ENCODE measurements at regions of chr7 and their contacts with region 1.

Region 1: DNA sequence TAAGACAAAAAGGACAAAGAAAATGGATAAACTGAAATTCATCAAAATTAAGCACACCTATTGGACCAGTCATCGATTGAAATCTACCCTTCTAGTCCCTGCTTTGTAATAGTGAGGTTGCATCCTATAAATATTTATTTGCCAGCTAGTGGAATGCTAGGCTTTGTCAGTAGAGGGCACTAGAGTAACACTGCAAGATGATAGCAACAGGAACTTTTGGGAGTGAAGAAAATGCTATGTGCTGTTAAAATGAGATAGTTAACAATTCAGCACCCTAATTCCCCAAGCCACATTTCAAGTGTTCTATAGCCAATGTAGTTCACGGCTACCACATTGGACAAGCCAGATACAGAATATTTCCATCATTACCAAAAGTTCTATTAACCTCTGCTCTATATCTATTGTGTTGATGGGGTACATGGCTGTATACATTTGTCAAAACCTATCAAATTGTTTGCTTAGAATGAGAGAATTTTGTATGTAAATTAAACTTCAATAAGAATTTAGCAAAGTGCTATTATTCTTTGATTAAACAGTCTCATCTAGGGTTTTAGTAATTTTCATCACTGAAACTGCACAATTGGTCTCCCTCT is 69.8 kb downstream of the LSMEM1 start:
- DNase-seq: peak; percentile 70
- ATAC-seq: no peak
- H3K4me3 ChIP-seq: no peak overlapping the region
- H3K4me3 Mint-ChIP-seq: no peak overlapping the region
- H3K27ac ChIP-seq: no peak overlapping the region
- H3K27ac Mint-ChIP-seq: no peak overlapping the region
- H3K4me1 ChIP-seq: no peaks in the 10 kb centered on the region
- H3K4me1 Mint-ChIP-seq: no peaks in the 10 kb centered on the region
- H3K27me3 ChIP-seq: peaks cover 0 to 7% (median under 1%) of the 10 kb centered on the region in 4 experiments
- H3K27me3 Mint-ChIP-seq: peaks cover 11% of the 10 kb centered on the region
- CTCF ChIP-seq: peak; percentile 97

Region 2: DNA sequence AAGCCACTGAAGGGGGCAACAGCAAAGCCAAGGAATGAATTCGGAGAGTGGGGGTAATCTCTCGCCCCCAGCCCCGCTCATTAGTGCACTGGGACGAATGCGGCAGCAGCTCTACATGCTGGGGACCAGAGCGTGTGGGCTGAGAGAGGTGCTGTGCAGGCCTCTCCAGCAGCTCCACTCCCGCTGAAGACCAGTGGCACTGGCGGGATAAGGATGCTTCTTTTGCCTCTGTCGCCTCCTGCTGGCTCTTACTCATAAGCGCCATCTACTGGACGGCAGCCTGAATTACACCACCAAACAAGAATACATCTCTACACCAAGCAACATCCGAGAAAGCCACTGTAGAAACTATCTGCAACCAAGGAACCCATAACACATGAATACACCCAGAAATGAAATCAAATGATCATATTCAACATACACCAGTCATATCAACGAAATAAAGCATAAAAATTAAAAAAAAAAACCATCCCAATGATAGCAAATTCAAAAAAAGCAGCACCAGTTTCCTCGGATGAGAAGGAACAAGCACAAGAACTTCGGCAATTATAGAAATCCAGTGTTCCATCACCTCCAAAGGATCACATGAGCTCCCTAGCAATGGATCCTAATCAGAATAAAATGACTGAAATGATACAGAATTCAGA is 318.7 kb after region 1 on chr7:
- CTCF ChIA-PET with region 1: interaction called, 9 read pairs
- POLR2A ChIA-PET with region 1: no interaction called
- intact Hi-C with region 1: loop called (anchors 1 kb)
- DNase-seq: peak; percentile 63
- ATAC-seq: peak; percentile 76
- H3K4me3 ChIP-seq: no peak overlapping the region
- H3K4me3 Mint-ChIP-seq: no peak overlapping the region
- H3K27ac ChIP-seq: no peak overlapping the region
- H3K27ac Mint-ChIP-seq: no peak overlapping the region
- H3K4me1 ChIP-seq: peaks cover 13 to 15% of the 10 kb centered on the region in 2 donors
- H3K4me1 Mint-ChIP-seq: peaks cover 56% of the 10 kb centered on the region
- H3K27me3 ChIP-seq: no peaks in the 10 kb centered on the region
- H3K27me3 Mint-ChIP-seq: no peaks in the 10 kb centered on the region
- CTCF ChIP-seq: peak; percentile 94

Region 3: GRCh38 chr7:112898432-112899290 is 348.1 kb after region 1 on chr7:
- CTCF ChIA-PET with region 1: interaction called, 45 read pairs
- POLR2A ChIA-PET with region 1: interaction called, 7 read pairs
- intact Hi-C with region 1: loop called (anchors 1 kb)
- DNase-seq: peak; percentile 70
- ATAC-seq: peak; percentile 54
- H3K4me3 ChIP-seq: no peak overlapping the region
- H3K4me3 Mint-ChIP-seq: no peak overlapping the region
- H3K27ac ChIP-seq: no peak overlapping the region
- H3K27ac Mint-ChIP-seq: no peak overlapping the region
- H3K4me1 ChIP-seq: no peaks in the 10 kb centered on the region
- H3K4me1 Mint-ChIP-seq: peaks cover 8% of the 10 kb centered on the region
- H3K27me3 ChIP-seq: no peaks in the 10 kb centered on the region
- H3K27me3 Mint-ChIP-seq: no peaks in the 10 kb centered on the region
- CTCF ChIP-seq: peak; percentile 91

Region 4: DNA sequence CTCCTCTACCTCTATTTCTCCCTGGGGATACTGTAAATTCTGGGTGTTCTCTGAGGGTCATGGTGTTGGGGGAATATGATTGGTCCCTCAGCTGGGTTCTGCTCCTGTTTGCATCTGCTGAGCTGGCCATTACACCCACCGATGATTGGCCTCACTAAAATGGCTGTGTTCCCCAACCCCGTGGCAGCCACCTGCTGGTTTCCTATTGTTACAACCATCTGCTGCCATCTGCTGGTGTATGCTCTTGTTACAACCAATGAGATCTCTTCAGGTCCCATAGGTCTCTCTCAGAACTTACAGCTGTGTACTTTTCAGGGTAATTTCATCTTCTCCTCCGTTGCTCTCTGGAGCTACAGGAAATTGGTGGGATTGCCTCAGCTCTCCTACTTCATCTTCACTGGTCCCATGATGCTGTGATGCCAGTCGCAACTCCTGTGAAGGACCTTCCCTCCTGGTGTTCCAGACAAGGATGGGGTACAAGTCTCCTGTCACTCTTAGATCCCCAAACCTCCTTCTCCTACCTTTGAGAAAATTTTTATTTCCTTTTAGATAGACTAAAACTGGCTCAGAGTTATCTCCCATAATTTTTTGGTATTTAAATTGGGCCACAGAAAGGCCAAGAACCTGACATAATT is 871.2 kb after region 1 on chr7:
- CTCF ChIA-PET with region 1: interaction called, 107 read pairs
- POLR2A ChIA-PET with region 1: no interaction called
- intact Hi-C with region 1: no loop called
- DNase-seq: peak; percentile 80
- ATAC-seq: peak; percentile 95
- H3K4me3 ChIP-seq: no peak overlapping the region
- H3K4me3 Mint-ChIP-seq: no peak overlapping the region
- H3K27ac ChIP-seq: no peak overlapping the region
- H3K27ac Mint-ChIP-seq: no peak overlapping the region
- H3K4me1 ChIP-seq: peaks cover 0 to 3% of the 10 kb centered on the region in 2 donors
- H3K4me1 Mint-ChIP-seq: peaks cover 2% of the 10 kb centered on the region
- H3K27me3 ChIP-seq: no peaks in the 10 kb centered on the region
- H3K27me3 Mint-ChIP-seq: peaks cover 2% of the 10 kb centered on the region
- CTCF ChIP-seq: peak; percentile 92

Region 5: DNA sequence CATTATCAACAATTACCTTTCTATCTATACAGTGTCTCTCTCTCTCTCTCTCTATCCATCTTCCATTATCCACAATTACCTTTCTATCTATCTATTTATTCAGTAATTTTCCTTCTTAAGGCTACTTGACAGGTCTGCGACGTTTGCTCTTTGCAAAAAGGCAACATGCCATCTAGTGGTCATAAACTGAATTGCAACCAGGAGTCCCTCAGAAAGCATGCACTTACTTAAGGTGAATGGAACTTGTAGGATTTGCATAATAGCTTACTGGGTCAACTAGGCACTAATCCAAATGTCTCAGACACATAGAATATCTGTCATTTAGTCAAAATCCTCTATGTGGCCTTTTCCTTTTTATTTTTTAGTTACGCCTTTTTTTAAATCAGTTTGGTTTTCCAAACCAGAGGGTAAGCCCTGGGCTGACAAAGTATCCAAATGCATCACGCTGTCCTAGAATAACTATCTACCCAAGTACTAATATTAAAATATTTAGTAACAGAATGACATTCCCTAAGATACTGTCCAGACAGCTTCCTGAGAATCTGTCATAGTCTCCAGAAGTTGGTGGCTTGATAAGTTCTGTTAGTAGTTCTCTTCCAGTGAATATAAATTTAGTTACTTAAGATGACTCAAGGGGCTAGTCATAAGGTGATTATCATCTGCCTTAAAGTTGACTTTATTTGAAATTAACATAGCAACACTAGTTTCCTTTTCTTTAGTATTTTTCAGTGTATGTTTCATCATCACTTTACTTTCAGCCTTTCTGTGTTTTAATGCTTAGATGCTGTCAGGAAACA is 1159.9 kb after region 1 on chr7:
- CTCF ChIA-PET with region 1: interaction called, 3 read pairs
- POLR2A ChIA-PET with region 1: no interaction called
- intact Hi-C with region 1: loop called (anchors 2 kb)
- DNase-seq: peak; percentile 66
- ATAC-seq: peak; percentile 69
- H3K4me3 ChIP-seq: no peak overlapping the region
- H3K4me3 Mint-ChIP-seq: no peak overlapping the region
- H3K27ac ChIP-seq: no peak overlapping the region
- H3K27ac Mint-ChIP-seq: no peak overlapping the region
- H3K4me1 ChIP-seq: no peaks in the 10 kb centered on the region
- H3K4me1 Mint-ChIP-seq: no peaks in the 10 kb centered on the region
- H3K27me3 ChIP-seq: no peaks in the 10 kb centered on the region
- H3K27me3 Mint-ChIP-seq: no peaks in the 10 kb centered on the region
- CTCF ChIP-seq: peak; percentile 99